GM10248 (cell line): ENCODE measurements at regions of chr10 and their contacts with region 1.

Region 1: DNA sequence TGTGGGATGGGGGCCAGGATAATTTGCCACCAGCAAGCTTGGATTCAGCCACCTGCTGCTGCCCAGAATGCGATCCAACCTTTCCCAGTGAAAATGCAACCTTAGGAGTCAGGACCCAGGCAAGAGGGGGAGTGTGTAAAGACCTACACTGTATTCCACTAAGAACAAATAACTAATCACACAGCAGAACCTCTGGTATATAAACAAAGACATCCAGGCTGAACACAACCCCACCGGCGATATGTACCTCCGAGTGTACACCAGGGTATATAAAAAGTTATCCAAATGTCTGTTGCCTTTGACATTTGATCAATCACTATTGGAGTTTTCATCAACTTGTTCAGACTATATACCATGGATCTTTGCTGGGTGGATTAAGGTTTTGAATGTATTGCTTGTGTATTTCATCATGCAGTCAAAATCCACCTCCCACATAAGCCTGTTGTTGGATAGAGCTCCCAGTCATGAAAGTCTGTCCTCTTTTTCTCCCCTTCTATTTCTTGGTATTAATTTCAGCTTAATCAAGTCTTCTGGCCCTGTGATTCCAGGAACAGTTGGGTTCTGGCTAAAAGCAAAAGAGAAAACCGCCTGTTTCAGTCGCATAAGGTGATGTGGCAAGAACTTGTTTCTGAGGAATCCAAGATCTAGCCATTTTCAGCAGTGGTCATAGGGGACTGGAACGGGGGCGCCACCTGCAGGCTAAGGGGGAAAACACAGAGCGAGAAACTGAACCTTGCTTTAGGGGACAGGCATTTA is 290.7 kb downstream of the CCDC3 start:
- DNase-seq: peak; percentile 82
- CTCF ChIP-seq: peak; percentile 95

Region 2: GRCh38 chr10:12195603-12196506 is 514.9 kb before region 1 on chr10 and contains the starts of genes CDC123 and NUDT5:
- CTCF ChIA-PET with region 1: interaction called, 12 read pairs
- POLR2A ChIA-PET with region 1: no interaction called
- DNase-seq: peak; percentile 92
- CTCF ChIP-seq: no peak

Region 3: DNA sequence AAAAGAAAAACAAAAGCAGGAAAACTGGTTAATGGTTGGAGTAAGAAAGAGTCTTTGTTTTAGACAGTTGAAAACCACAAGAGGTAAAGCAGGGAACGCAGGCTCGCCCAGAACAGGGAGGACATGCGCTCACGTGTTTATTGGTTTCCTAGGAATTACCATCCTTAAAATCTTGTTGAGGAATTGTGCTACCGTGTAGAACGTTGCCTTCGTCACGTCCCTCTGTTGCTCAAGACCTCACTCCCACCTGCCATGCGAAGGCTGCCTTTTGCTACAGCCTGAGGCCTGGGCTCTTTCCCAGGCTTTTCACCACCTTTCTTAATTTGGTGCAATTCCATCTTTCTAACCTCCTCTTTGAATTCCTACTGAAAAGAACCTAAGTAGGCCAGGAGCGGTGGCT is 423.0 kb before region 1 on chr10:
- CTCF ChIA-PET with region 1: no interaction called
- POLR2A ChIA-PET with region 1: no interaction called
- DNase-seq: no peak
- CTCF ChIP-seq: no peak

Region 4: DNA sequence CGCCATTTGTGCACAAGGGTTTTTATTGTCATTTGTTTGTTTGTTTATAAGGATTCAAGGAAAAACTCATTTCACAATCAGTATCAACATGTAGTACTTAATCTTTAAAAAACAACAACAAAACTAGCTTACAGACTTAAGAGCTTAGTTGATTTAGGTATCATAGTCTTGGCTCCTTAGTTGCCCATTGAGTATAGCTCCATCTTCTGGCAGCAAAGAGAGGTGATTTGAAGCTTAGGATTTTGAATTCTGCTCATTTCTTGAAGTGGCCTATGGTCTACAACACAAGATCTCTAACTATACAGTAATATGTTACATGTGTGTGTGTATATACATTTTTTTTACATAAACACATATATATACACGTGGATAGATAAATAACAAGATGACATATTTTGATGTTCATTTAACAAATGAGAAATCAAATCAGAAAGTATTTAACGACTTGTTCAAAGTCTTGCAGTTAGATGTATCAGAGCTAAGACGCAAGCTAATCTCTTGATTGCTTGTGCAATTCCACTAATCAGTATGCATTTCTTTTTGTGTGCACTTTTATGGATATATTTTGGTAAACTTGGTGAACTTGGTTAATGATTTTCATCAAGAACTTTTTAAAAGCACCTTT is 54.1 kb before region 1 on chr10:
- CTCF ChIA-PET with region 1: interaction called, 12 read pairs
- POLR2A ChIA-PET with region 1: no interaction called
- DNase-seq: peak; percentile 75
- CTCF ChIP-seq: peak; percentile 57

Region 5: GRCh38 chr10:12679636-12680035 is 31.1 kb before region 1 on chr10:
- CTCF ChIA-PET with region 1: no interaction called
- POLR2A ChIA-PET with region 1: no interaction called
- DNase-seq: no peak
- CTCF ChIP-seq: no peak

Region 6: GRCh38 chr10:12690525-12691126 is 20.1 kb before region 1 on chr10:
- CTCF ChIA-PET with region 1: interaction called, 67 read pairs
- POLR2A ChIA-PET with region 1: no interaction called
- DNase-seq: no peak
- CTCF ChIP-seq: no peak

Region 7: DNA sequence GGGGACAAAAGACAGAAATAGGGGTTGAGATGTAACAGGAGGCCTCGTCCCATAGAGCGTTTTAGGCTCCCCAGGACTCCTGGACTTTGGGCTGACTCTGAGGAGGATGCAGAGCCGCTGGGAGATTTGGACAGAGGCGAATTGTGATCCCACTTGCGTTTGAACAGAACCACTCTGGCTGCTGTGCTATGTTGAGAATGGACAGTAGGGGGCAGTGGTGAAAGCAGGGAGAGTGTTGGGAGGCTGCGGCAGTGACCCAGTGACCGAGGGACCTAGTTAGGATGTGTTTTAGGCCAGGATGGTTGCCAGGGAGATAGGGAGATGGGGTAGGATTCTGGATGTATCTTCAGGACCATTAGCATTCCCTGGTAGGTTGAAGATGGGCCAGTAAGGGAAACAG is 19.1 kb after region 1 on chr10:
- CTCF ChIA-PET with region 1: interaction called, 38 read pairs
- POLR2A ChIA-PET with region 1: no interaction called
- DNase-seq: no peak
- CTCF ChIP-seq: peak; percentile 25

Region 8: DNA sequence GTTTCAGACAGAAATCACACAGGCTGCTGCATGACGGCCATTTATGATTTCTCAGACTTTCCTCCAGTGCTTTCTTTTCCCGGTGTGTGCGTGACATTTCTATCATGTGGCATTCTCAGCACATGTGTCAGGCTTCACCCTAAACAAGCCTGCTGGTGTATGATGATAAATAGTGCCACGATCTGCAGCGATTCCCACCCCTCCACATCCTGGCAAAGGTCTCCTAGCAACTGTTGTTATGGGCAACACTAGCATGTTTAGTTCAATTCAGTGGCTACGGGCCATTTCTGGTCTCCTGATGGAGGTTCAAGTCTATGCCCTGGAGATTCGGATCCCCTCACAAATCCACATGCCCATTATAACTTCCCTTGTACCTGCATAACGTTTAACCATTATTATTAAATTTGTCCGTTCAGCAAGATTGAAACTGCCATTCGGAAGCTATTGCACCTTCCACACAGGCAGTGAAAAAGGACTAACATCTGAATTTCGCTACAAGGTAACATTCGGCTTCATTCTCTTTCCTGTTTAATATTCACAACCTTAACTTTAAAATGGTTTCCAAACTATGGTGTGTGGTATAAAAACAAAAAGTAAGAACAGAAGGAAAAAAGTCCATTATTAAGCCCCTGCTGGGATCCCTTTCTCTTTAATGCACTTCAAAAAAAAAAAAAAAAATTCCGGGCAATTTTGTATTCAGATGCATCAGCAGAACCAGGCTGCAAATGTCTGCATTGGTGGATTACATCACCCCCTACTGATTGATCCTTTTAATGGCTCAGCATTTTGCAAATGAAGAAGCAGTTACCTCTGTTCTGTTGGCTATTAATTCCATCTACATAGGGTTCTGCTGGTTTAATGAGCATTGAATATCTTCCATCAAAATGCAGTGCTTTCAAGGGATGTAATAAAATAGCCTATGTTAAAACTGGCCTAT is 1529.7 kb after region 1 on chr10:
- CTCF ChIA-PET with region 1: no interaction called
- POLR2A ChIA-PET with region 1: no interaction called
- DNase-seq: no peak
- CTCF ChIP-seq: peak; percentile 21